H1 (cell line): ENCODE measurements at regions of chr6 and their contacts with region 1.

Region 1: GRCh38 chr6:41597246-41598000 is 40.8 kb upstream of the MDFI start:
- DNase-seq: no peak
- H3K4me3 ChIP-seq: no peak overlapping the region
- H3K27ac ChIP-seq: no peak overlapping the region
- H3K4me1 ChIP-seq: peaks cover 0 to 27% (median 16%) of the 10 kb centered on the region in 4 experiments; a peak in 6 of 7 replicates
- H3K27me3 ChIP-seq: no peaks in the 10 kb centered on the region
- CTCF ChIP-seq: no peak
- EP300 ChIP-seq: no peak
- POLR2A ChIP-seq: no peak
- RAD21 ChIP-seq: no peak

Region 2: GRCh38 chr6:41551086-41551700 is 46.2 kb before region 1 on chr6:
- CTCF ChIA-PET with region 1: interaction called, 17 read pairs
- POLR2A ChIA-PET with region 1: interaction called, 6 read pairs
- DNase-seq: no peak
- H3K4me3 ChIP-seq: no peak overlapping the region
- H3K27ac ChIP-seq: no peak overlapping the region
- H3K4me1 ChIP-seq: peaks cover 41 to 70% (median 50%) of the 10 kb centered on the region in 4 experiments
- H3K27me3 ChIP-seq: peaks cover 20 to 78% (median 73%) of the 10 kb centered on the region in 4 experiments
- CTCF ChIP-seq: no peak
- EP300 ChIP-seq: no peak
- POLR2A ChIP-seq: no peak
- RAD21 ChIP-seq: no peak

Region 3: DNA sequence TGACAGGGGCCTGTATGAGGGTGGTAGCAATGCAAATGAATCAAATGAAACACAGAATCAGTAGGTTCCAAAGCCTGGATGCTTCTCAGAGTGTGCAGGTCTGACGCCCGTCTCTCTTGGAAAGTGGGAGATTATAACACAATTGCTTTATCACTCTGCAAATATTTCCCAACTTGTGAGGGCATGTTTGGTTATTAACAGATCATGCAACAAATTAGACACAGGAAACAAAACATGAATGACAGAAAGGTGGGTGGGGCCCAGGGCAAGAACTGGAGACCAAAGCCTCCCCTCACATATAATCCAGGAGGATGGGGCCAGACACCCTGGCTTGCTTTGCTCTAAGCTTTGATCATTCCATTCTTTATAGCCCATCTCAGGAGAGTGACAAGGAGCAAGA is 728.8 kb after region 1 on chr6:
- CTCF ChIA-PET with region 1: no interaction called
- POLR2A ChIA-PET with region 1: no interaction called
- DNase-seq: no peak
- H3K4me3 ChIP-seq: no peak overlapping the region
- H3K27ac ChIP-seq: no peak overlapping the region
- H3K4me1 ChIP-seq: no peaks in the 10 kb centered on the region
- H3K27me3 ChIP-seq: no peaks in the 10 kb centered on the region
- CTCF ChIP-seq: no peak
- EP300 ChIP-seq: no peak
- POLR2A ChIP-seq: no peak
- RAD21 ChIP-seq: no peak